Common myeloid progenitor, CD34-positive (primary cell): ENCODE measurements at regions of chr15 and their contacts with region 1.

Region 1: DNA sequence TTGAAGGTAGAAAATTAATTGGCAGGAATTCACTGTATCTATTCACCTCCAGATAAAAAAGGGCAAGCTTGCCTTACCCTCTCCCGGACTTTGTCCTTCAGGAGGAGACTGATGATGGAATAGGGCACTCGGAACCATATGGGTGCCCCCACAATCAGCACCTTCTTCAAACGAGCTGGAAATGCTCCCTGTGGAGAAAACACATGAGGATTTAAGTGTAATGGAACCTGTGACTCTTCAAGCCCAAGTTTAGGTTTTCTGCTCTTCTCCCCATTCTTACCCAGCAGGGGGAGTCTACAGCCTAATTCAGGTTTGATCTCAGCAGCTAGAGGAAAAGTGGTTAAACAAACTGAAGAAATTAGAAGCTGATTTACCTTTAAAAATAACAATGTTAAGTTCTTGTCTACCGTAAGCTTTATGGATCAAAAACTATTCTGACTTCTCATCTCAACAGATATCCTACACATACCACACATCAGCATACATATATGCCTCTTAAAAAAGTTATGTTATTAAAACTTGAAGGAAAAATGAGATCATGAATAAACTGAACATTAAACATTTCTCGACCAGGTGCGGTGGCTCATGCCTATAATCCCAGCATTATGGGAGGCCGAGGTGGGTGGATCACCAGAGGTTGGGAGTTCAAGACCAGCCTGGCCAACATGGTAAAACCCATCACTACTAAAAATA is 57.5 kb upstream of the SIN3A start:
- DNase-seq: peak; percentile 59 to 75 (median 73)
- H3K4me3 ChIP-seq: no peak overlapping the region
- H3K27ac ChIP-seq: no peak overlapping the region
- H3K4me1 ChIP-seq: no peaks in the 10 kb centered on the region
- H3K27me3 ChIP-seq: no peaks in the 10 kb centered on the region

Region 2: DNA sequence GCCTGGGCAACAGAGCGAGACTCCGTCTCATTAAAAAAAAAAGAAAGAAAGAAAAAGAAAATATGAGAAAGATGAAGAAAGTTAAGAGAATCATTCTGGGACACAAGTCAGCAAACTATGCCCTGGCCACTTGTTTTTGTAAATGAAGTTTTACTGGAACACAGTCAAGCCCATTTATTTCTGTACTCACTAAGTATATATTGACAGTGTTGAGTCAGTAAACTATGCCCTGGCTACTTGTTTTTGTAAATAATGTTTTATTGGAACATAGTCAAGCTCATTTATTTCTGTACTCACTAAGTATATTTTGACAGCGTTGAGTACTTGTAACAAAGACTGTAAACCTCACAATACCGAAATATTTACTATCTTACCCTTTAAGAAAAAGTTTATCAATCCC is 15.3 kb before region 1 on chr15:
- CTCF ChIA-PET with region 1: interaction called, 12 read pairs
- POLR2A ChIA-PET with region 1: interaction called, 4 read pairs
- DNase-seq: no peak
- H3K4me3 ChIP-seq: no peak overlapping the region
- H3K27ac ChIP-seq: no peak overlapping the region
- H3K4me1 ChIP-seq: no peaks in the 10 kb centered on the region
- H3K27me3 ChIP-seq: no peaks in the 10 kb centered on the region

Region 3: GRCh38 chr15:75625542-75626347 is 116.8 kb after region 1 on chr15 and contains the start of gene SNUPN:
- CTCF ChIA-PET with region 1: interaction called, 10 read pairs
- POLR2A ChIA-PET with region 1: no interaction called
- DNase-seq: peak; percentile 94 to 99 (median 97)
- H3K4me3 ChIP-seq: peak within 1 kb of the TSS; percentile 63 to 98 (median 93)
- H3K27ac ChIP-seq: peak within 1 kb of the TSS; percentile 92 to 96
- H3K4me1 ChIP-seq: peaks cover 7 to 37% (median 20%) of the 10 kb centered on the region in 4 experiments
- H3K27me3 ChIP-seq: no peaks in the 10 kb centered on the region

Region 4: GRCh38 chr15:75639709-75640482 is 130.9 kb after region 1 on chr15 and contains the start of gene IMP3:
- CTCF ChIA-PET with region 1: interaction called, 18 read pairs
- POLR2A ChIA-PET with region 1: no interaction called
- DNase-seq: peak; percentile 97 to 99 (median 99)
- H3K4me3 ChIP-seq: peak within 1 kb of the TSS; percentile 77 to 99 (median 84)
- H3K27ac ChIP-seq: peak within 1 kb of the TSS; percentile 54 to 86
- H3K4me1 ChIP-seq: peaks cover 10 to 37% (median 27%) of the 10 kb centered on the region in 4 experiments
- H3K27me3 ChIP-seq: no peaks in the 10 kb centered on the region

Region 5: DNA sequence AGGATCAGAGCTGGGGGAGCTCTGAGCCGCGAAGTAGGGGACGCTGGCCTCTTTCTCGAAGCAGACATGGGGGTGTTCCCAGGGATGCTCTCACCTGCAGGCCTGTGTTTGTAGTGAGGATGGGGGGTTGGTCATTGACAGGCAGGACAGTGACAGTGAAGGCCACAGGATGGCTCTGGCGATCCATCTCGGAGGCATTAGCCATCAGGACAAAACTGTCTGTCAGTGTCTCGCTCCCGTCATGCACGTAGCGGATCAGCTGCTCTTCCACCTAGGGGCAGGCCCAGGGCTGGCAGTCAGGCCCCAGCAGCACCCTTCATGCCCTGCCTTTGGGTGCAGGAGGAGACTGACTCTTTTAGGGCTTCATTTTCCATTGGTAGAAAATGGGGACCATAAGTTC is 175.7 kb after region 1 on chr15:
- CTCF ChIA-PET with region 1: interaction called, 13 read pairs
- POLR2A ChIA-PET with region 1: no interaction called
- DNase-seq: no peak
- H3K4me3 ChIP-seq: no peak overlapping the region
- H3K27ac ChIP-seq: no peak overlapping the region
- H3K4me1 ChIP-seq: no peaks in the 10 kb centered on the region
- H3K27me3 ChIP-seq: peaks cover 0 to 28% (median 16%) of the 10 kb centered on the region in 5 experiments